AG04450 (cell line): ENCODE measurements at regions of chr19 and their contacts with region 1.

Region 1: DNA sequence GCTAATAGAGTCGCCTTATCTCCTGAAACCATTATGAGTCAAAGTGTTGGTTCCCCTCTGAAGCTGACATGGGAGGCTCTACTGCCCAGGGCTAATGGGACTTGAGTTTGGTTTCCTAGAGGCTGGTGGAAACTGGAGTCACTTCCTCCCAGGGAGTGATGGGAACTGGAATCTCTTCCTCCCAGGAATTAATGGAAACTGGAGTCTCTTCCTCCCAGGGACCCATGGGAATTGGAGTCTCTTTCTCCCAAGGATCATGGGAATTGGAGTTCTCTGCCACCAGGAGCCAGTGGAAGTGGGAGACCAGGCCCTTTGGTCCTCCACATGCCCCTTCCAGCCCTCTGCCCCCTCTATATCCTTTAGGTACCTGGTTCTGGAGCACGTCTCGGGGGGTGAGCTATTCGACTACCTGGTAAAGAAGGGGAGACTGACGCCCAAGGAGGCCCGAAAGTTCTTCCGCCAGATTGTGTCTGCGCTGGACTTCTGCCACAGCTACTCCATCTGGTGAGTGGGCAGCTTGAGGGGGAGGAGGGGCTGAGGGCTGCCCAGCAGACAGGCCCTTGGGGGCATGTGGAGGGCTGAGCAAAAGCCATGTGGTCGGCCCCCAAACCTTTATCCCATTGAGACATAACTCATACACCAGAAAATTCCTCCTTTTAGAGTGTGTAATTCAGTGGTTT is 5.5 kb downstream of the BRSK1 start:
- DNase-seq: no peak
- H3K4me3 ChIP-seq: no peak overlapping the region
- H3K27ac ChIP-seq: no peak overlapping the region
- H3K27me3 ChIP-seq: no peaks in the 10 kb centered on the region
- CTCF ChIP-seq: no peak

Region 2: DNA sequence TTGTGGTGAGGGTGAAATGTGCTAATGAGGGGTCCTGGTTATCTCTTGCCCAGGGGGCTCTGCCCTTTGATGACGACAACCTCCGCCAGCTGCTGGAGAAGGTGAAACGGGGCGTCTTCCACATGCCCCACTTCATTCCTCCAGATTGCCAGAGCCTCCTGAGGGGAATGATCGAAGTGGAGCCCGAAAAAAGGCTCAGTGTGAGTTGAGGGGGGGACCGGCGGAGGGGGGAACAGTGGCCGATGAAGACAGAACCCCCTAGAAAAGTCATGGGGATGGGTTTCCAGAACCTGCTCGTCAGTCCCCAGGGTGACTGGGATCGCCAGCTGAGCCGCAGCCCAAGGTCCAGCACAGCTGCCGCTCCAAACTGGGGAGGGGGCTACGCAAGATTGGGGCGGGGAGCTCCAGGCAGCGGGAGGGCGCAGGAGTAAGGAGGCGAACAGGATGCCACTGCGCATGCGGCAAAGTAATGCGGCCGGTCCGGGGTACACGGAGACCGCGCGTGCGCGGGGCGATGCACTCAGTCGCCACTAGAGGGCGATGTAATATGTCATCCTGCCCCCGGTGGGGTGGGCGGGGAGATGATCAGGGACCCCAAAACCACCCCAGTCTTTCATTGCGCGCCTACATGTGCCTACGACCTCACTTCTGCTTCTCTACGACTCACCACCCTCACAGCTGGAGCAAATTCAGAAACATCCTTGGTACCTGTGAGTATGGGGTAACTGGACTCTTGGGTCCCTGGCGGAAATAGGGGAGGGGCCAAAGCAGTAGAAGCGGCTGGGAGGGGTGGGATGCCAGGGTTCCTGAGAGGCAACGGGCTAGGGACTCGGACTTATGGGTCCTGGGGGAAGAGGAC is 12.4 kb after region 1 on chr19:
- CTCF ChIA-PET with region 1: interaction called, 41 read pairs
- POLR2A ChIA-PET with region 1: no interaction called
- DNase-seq: peak; percentile 24
- H3K4me3 ChIP-seq: peak overlapping the region; percentile 41
- H3K27ac ChIP-seq: no peak overlapping the region
- H3K27me3 ChIP-seq: no peaks in the 10 kb centered on the region
- CTCF ChIP-seq: peak; percentile 78

Region 3: GRCh38 chr19:55312621-55313512 is 23.6 kb after region 1 on chr19:
- CTCF ChIA-PET with region 1: interaction called, 21 read pairs
- POLR2A ChIA-PET with region 1: no interaction called
- DNase-seq: no peak
- H3K4me3 ChIP-seq: no peak overlapping the region
- H3K27ac ChIP-seq: no peak overlapping the region
- H3K27me3 ChIP-seq: no peaks in the 10 kb centered on the region
- CTCF ChIP-seq: no peak

Region 4: GRCh38 chr19:55385740-55386529 is 96.7 kb after region 1 on chr19 and contains the start of gene RPL28:
- CTCF ChIA-PET with region 1: interaction called, 15 read pairs
- POLR2A ChIA-PET with region 1: no interaction called
- DNase-seq: peak; percentile 95
- H3K4me3 ChIP-seq: peak within 1 kb of the TSS; percentile 99
- H3K27ac ChIP-seq: peak within 1 kb of the TSS; percentile 93
- H3K27me3 ChIP-seq: no peaks in the 10 kb centered on the region
- CTCF ChIP-seq: no peak
- polyA plus RNA-seq, gene RPL28: 325 and 535 TPM in 2 replicates

Region 5: DNA sequence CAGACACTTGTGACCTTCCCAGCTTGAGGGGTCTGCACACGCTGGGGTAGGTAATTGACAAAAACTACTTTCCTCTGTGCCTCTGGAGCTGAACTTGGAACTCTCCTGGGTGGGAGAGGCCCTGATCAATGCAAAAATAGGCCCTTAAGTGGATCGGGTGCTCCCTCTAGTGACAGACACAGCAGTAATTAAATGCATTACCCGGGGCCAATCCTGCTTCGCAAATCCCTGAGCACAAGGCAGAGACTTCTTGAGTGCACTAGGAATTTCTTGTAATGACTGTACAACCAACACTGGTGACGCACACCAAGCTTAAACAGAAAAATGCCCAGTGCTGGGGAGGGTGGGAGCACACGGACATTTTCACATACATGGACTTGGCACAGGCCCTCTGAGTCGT is 128.9 kb after region 1 on chr19:
- CTCF ChIA-PET with region 1: interaction called, 51 read pairs
- POLR2A ChIA-PET with region 1: no interaction called
- DNase-seq: peak; percentile 73
- H3K4me3 ChIP-seq: no peak overlapping the region
- H3K27ac ChIP-seq: no peak overlapping the region
- H3K27me3 ChIP-seq: peaks cover 5% of the 10 kb centered on the region
- CTCF ChIP-seq: peak; percentile 82